Pancreas (tissue), 10 donors: ENCODE measurements at regions of chr17 and their contacts with region 1.

Region 1: GRCh38 chr17:38667099-38667786 is 7.5 kb downstream of the EPOP start:
- DNase-seq: peak; percentile 51 to 81 (median 70)
- ATAC-seq: peak; percentile 70 to 91 (median 88)
- H3K4me3 ChIP-seq: no peak overlapping the region
- H3K27ac ChIP-seq: no peak overlapping the region
- H3K4me1 ChIP-seq: no peaks in the 10 kb centered on the region
- H3K27me3 ChIP-seq: no peaks in the 10 kb centered on the region
- CTCF ChIP-seq: peak; percentile 94 to 98 (median 96)

Region 2: DNA sequence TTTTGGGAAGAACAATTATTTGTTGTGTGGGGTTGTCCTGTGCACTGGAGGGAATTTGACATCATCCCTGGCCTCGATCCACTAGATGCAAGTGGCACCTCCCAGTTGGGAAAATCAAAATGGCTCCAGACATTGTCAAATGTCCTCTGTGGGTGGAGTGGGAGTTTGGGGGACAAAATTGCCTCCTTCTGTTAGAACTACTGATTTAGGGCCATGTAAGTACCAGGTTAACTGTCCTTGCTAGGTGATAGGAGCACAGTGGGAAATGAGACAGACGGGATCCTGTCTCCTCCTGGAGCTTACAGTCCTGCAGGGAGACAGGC is 182.1 kb before region 1 on chr17:
- intact Hi-C with region 1: loop called in 2 of 3 experiments (anchors 5 to 10 kb)
- DNase-seq: no peak
- ATAC-seq: no peak
- H3K4me3 ChIP-seq: no peak overlapping the region
- H3K27ac ChIP-seq: no peak overlapping the region
- H3K4me1 ChIP-seq: no peaks in the 10 kb centered on the region
- H3K27me3 ChIP-seq: no peaks in the 10 kb centered on the region
- CTCF ChIP-seq: no peak

Region 3: DNA sequence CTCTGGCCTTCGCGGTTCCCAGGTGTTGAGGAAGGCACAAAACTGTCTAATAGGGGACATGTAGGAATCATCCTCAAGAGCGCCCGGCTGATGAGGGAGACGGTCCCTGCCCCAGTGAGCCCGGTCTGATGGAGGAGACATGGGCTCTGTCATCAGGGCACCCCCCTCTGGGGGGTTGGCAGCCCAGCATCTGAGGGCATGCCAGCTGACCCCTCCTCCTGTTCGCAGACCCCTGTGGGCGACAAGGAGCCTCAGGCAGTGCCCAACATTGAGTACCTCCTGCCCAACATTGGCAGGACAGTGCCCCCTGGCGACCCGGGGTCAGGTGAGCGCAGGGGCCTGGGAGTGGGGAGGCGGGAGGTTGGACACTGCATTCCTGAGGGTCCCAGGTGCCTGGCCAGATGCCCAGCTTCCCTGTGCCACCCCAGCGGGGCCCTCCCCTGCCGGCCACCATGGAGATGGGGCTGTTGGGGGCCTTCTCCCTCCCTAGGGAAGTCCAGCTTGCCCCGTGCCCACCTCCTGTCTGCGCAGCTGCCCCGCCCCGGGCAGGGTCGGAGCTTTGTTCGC is 169.0 kb before region 1 on chr17:
- intact Hi-C with region 1: loop called in 2 of 3 experiments (anchors 5 to 10 kb)
- DNase-seq: no peak
- ATAC-seq: no peak
- H3K4me3 ChIP-seq: no peak overlapping the region
- H3K27ac ChIP-seq: no peak overlapping the region
- H3K4me1 ChIP-seq: no peaks in the 10 kb centered on the region
- H3K27me3 ChIP-seq: no peaks in the 10 kb centered on the region
- CTCF ChIP-seq: no peak

Region 4: GRCh38 chr17:38560508-38561318 is 106.5 kb before region 1 on chr17:
- intact Hi-C with region 1: loop called in 1 of 3 experiments (anchors 10 kb)
- DNase-seq: no peak
- ATAC-seq: no peak
- H3K4me3 ChIP-seq: no peak overlapping the region
- H3K27ac ChIP-seq: no peak overlapping the region
- H3K4me1 ChIP-seq: peaks cover 0 to 11% (median 9%) of the 10 kb centered on the region in 3 donors
- H3K27me3 ChIP-seq: peaks cover 0 to 7% (median 0%) of the 10 kb centered on the region in 4 donors
- CTCF ChIP-seq: no peak